GM12878 (cell line): ENCODE measurements at regions of chr6 and their contacts with region 1.

Region 1: DNA sequence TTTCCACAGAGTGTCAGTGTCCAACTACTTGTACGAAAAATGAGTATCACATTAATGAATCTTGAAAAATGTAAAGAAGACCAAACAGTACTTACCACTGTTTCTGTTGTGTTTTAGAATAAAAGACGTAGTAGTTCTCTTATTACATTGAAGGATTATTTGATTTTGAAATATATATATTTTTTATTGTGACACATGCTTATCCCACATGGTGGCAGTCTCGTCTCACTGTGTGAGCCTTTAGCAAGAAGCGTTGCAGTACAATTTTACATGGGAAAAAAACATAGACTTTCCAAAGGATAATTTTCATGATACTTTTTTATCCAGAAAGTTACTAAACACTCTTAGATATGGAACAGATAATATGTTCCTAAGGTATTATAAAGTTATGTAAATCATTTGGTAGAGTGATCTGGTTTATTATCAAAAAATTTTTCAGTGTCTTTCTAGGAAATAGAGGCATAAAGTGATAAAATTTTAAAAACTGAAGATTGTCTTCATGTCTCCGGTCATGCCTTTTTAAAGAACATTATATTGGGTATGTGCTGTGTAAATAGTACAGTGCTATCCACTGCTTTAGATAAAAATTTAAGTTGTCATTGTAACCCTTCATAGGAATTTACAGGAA is 117.5 kb upstream of the SAMD5 start:
- DNase-seq: no peak
- ATAC-seq: no peak
- H3K4me3 ChIP-seq: no peak overlapping the region
- H3K27ac ChIP-seq: no peak overlapping the region
- H3K4me1 ChIP-seq: no peaks in the 10 kb centered on the region
- H3K27me3 ChIP-seq: no peaks in the 10 kb centered on the region
- CTCF ChIP-seq: peak in 2 of 3 experiments; percentile 17 to 58; a peak in 3 of 6 replicates
- EP300 ChIP-seq: no peak
- POLR2A ChIP-seq: no peak
- RAD21 ChIP-seq: peak; percentile 61

Region 2: GRCh38 chr6:147406783-147407182 is 15.8 kb after region 1 on chr6:
- CTCF ChIA-PET with region 1: no interaction called
- POLR2A ChIA-PET with region 1: no interaction called
- RAD21 ChIA-PET with region 1: no interaction called
- SMC1A ChIA-PET with region 1: no interaction called
- in situ Hi-C with region 1: no loop called
- intact Hi-C with region 1: no loop called
- DNase-seq: no peak
- ATAC-seq: no peak
- H3K4me3 ChIP-seq: no peak overlapping the region
- H3K27ac ChIP-seq: no peak overlapping the region
- H3K4me1 ChIP-seq: no peaks in the 10 kb centered on the region
- H3K27me3 ChIP-seq: no peaks in the 10 kb centered on the region
- CTCF ChIP-seq: no peak
- EP300 ChIP-seq: no peak
- POLR2A ChIP-seq: no peak
- RAD21 ChIP-seq: no peak

Region 3: DNA sequence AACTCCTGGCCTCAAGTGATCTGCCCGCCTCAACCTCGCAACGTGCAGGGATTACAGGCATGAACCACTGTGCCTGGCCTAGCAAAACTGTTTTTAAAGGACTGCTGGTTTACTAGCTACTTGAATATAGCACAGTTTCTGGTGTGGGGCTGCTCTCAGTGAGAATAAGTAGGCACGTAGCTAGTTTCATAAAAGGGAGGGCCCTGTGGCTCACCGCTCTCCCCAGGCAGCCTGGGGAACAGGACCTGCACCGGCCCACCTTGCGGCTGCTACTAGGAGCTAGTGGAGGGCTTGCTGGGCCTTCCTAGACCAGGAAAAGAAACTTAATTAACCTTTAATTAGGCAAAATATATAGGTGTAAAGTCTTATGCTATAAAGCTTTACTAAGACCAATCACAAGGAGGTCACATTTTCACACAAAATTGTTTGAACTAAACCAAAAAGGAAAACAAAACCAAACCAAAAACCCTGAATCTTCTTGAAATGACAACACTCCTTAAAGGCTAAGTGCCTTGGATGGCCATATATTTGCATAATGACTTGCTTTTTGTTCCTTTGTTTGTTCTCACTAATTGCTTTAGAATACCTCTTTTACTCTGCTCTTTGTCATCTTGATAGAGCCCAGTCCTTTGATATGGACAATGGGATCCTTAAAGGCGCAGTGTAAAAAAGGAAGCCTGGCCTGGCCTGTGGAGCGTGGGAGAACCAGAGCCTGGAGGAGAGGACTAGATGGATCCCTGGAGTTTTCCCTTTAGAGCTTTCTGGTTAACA is 47.9 kb after region 1 on chr6:
- CTCF ChIA-PET with region 1: no interaction called
- POLR2A ChIA-PET with region 1: no interaction called
- RAD21 ChIA-PET with region 1: no interaction called
- SMC1A ChIA-PET with region 1: no interaction called
- in situ Hi-C with region 1: no loop called
- intact Hi-C with region 1: no loop called
- DNase-seq: no peak
- ATAC-seq: peak; percentile 74
- H3K4me3 ChIP-seq: no peak overlapping the region
- H3K27ac ChIP-seq: no peak overlapping the region
- H3K4me1 ChIP-seq: no peaks in the 10 kb centered on the region
- H3K27me3 ChIP-seq: no peaks in the 10 kb centered on the region
- CTCF ChIP-seq: no peak
- EP300 ChIP-seq: 0 out of 4 replicates have a peak, but pooled peaks of 1 of the 2 experiments have one; percentile 19
- POLR2A ChIP-seq: no peak
- RAD21 ChIP-seq: no peak

Region 4: DNA sequence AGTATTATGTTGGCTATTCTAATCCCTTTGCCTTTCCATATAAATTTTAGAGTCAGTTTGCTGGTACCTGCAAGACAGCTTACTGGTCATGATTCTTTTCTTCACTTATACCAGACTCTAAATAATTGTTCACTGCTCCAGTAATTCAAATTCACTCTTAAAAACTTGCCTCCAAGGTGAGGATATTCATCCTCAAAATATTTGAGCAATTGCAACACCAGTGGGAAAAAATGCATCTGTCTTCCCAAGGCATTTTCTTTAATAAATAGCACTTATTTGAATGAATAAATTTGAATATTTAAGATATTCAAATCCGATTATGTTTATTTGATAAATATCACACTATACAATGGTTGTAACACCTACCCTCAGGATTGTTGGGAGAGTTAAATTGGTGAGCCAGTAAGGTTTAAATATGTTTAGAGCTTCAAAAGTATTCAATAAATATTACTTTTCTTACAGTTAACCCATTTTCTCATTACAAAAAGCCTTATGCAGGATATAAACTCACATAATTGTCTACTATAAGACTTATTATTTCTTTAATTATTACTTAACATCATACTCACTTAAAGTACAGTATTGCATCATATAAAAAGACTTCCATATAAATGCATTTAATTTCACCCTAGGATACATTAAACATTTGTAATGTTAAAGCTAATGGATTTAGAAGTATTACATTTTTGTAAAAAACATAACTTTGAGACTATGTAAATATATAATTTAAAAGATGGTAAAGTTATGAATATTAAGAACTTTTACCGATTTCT is 403.0 kb after region 1 on chr6:
- CTCF ChIA-PET with region 1: no interaction called
- POLR2A ChIA-PET with region 1: no interaction called
- RAD21 ChIA-PET with region 1: no interaction called
- SMC1A ChIA-PET with region 1: no interaction called
- in situ Hi-C with region 1: no loop called
- intact Hi-C with region 1: no loop called
- DNase-seq: no peak
- ATAC-seq: no peak
- H3K4me3 ChIP-seq: no peak overlapping the region
- H3K27ac ChIP-seq: no peak overlapping the region
- H3K4me1 ChIP-seq: no peaks in the 10 kb centered on the region
- H3K27me3 ChIP-seq: no peaks in the 10 kb centered on the region
- CTCF ChIP-seq: no peak
- EP300 ChIP-seq: no peak
- POLR2A ChIP-seq: no peak
- RAD21 ChIP-seq: no peak

Region 5: DNA sequence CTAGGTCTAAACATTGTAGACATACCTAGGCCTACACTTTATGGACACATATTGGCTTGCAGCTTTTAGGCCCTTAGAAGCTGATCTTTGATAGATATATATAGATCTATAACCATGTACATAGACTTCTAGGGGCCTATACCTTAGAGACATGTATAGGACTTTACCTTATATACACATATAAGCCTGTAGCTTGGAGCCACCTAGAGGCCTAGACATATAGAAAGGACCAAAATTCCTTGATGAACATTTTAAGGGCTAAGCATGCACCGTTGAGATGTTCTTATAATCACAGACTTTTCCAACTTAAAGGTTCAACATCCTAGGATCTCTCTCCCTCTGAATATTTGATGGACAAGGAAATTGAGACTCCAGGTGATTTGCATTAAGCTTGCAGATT is 580.0 kb after region 1 on chr6:
- CTCF ChIA-PET with region 1: no interaction called
- POLR2A ChIA-PET with region 1: no interaction called
- RAD21 ChIA-PET with region 1: no interaction called
- SMC1A ChIA-PET with region 1: no interaction called
- in situ Hi-C with region 1: no loop called
- intact Hi-C with region 1: loop called (anchors 10 kb)
- DNase-seq: no peak
- ATAC-seq: peak; percentile 39; the same call in 1 of the 3 replicates
- H3K4me3 ChIP-seq: no peak overlapping the region
- H3K27ac ChIP-seq: no peak overlapping the region
- H3K4me1 ChIP-seq: no peaks in the 10 kb centered on the region
- H3K27me3 ChIP-seq: no peaks in the 10 kb centered on the region
- CTCF ChIP-seq: peak in 1 of 3 experiments; percentile 10; a peak in 1 of 6 replicates
- EP300 ChIP-seq: no peak
- POLR2A ChIP-seq: no peak
- RAD21 ChIP-seq: peak; percentile 26; the same call in 1 of the 2 replicates